ENCODE measurements at regions of chr1 and their contacts with region 1.

Region 1: DNA sequence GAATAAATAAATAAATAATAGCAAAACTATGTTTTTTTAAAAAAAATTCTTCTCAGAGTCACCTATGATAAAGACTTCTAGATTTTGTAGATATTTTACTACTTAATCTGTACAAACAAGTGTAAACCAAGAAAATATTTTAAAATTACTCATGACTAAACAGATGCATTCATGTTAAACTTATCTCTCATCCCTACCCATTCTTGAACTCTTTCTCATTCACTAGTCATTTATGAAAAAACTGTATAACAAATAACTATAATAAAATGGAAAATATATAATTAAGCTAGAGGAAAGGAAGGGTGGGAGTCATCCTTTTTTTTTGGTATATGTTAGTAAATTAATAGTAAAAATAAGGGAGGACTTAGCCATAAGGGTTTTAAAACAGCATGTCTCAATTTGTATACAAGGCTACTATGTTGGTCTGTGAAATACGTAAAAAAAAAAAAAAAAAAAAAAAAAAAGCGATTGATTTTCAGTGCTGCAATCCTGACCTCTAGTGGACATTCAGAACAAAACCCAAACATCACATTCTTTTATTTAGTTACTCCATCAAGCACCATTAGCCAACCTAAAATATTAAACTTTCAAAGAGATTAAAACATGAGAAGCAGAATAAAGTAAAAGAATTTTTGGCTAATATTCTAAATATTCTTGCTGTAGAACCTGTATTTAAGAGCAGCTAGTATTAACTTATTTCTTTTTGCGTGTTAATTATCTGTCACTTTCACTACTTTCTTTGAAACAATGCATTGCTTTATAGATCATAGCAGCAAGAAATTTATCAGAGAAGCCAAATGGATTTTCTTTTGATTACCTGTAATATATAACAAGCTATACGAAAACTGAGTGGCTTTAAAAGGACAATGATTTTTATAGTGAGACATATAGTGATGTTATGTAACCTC is 255.8 kb upstream of the CACYBP start:
- DNase-seq: peak; percentile 28
- ATAC-seq: no peak; the same call in 1 of the 2 replicates
- H3K4me3 ChIP-seq: no peak overlapping the region
- H3K27ac ChIP-seq: no peak overlapping the region
- H3K4me1 ChIP-seq: no peaks in the 10 kb centered on the region
- H3K27me3 ChIP-seq: no peaks in the 10 kb centered on the region
- CTCF ChIP-seq: peak; percentile 53 to 75 (median 60); a peak in 5 of 6 replicates
- POLR2A ChIP-seq: no peak
- RAD21 ChIP-seq: peak; percentile 78

Region 2: DNA sequence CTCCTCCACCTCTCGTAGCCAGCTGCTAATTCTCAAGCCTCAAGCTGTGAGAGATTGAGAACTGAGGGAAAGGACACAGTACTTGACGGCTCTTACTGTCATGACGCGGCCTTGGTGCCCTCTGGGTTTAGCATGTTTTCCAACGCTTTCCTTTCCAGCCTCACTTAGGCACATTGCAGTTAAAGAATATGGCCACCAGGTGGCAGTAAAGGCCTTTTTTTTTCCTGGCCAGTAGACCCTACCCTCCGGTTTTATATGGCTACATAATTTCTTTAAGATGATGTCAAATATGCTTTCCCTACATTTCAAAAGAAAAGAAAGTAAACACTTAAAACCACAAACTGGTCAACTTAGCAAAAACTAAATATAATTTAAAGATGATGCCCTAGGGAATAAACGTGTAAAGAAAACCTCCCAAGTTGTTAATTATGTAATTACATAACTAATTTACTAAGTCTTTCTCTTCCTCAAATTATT is 1323.5 kb before region 1 on chr1:
- CTCF ChIA-PET with region 1: no interaction called
- POLR2A ChIA-PET with region 1: no interaction called
- RAD21 ChIA-PET with region 1: no interaction called
- intact Hi-C with region 1: loop called (anchors 5 kb)
- DNase-seq: peak; percentile 76
- ATAC-seq: peak; percentile 89
- H3K4me3 ChIP-seq: no peak overlapping the region
- H3K27ac ChIP-seq: no peak overlapping the region
- H3K4me1 ChIP-seq: peaks cover 2 to 27% of the 10 kb centered on the region in 2 experiments; a peak in 3 of 4 replicates
- H3K27me3 ChIP-seq: no peaks in the 10 kb centered on the region
- CTCF ChIP-seq: peak; percentile 61 to 91 (median 80)
- POLR2A ChIP-seq: no peak
- RAD21 ChIP-seq: peak; percentile 96

Region 3: DNA sequence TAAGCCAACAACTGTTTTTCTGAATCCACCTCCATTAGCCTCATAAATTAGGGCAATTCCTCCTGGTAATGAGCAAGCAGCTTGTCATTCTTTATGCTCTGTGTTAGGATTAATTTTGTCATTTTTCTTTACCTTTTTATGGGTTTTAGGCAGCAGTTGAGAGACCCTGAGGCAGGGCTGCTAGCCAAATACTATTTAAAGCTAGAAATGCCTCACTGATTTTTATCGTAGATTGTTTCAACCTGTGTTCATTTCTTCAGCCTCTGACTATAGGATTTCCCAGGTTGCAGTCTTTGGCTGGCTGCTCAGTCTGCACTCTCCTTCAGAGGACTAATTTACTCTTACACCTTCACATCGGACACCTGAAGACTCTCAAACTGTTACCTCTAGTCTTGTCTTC is 646.5 kb before region 1 on chr1:
- CTCF ChIA-PET with region 1: no interaction called
- POLR2A ChIA-PET with region 1: no interaction called
- RAD21 ChIA-PET with region 1: no interaction called
- intact Hi-C with region 1: loop called (anchors 5 kb)
- DNase-seq: no peak
- ATAC-seq: no peak
- H3K4me3 ChIP-seq: no peak overlapping the region
- H3K27ac ChIP-seq: no peak overlapping the region
- H3K4me1 ChIP-seq: no peaks in the 10 kb centered on the region
- H3K27me3 ChIP-seq: no peaks in the 10 kb centered on the region
- CTCF ChIP-seq: no peak
- POLR2A ChIP-seq: no peak
- RAD21 ChIP-seq: no peak

Region 4: DNA sequence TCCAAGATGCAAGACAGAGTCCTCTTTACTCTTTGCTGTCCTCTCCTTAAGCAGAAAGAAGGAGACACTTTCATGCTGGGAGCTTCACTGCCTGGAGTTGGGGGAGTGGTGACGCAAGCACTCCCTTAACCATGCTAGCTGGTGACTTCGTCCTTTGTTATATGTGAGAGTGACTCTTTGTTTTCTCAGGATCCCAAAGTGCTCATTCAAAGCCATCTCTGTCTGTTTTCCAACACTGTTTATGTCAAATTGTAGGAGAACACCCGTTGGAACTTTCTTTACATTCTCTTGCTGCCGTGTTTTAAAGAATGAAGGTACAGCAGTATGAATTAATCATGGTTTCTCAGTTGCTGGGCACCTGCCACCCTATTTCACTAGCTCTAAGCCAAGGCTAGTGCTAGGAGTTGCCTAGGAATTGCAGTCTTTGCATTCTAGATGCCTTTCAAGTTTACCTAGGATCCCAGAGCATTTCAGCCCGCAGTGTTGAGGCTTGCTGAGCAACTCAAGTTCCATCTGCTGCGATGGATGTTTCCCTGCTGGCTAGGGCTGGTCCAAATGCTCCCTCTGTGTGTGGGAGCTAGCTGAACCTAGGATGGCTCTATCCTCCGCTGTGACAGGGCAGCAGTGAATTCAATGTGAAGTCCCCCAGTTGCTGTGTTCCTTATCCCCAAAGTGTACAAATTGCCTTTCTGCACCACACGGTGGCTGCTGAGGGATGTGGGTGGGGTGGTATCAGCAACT is 378.7 kb before region 1 on chr1:
- CTCF ChIA-PET with region 1: no interaction called
- POLR2A ChIA-PET with region 1: no interaction called
- RAD21 ChIA-PET with region 1: no interaction called
- intact Hi-C with region 1: no loop called
- DNase-seq: no peak
- ATAC-seq: no peak
- H3K4me3 ChIP-seq: no peak overlapping the region
- H3K27ac ChIP-seq: no peak overlapping the region
- H3K4me1 ChIP-seq: no peaks in the 10 kb centered on the region
- H3K27me3 ChIP-seq: no peaks in the 10 kb centered on the region
- CTCF ChIP-seq: no peak
- POLR2A ChIP-seq: no peak
- RAD21 ChIP-seq: no peak

Region 5: GRCh38 chr1:174726167-174726879 is 17.6 kb before region 1 on chr1:
- CTCF ChIA-PET with region 1: interaction called, 11 read pairs
- POLR2A ChIA-PET with region 1: no interaction called
- RAD21 ChIA-PET with region 1: no interaction called
- intact Hi-C with region 1: no loop called
- DNase-seq: peak; percentile 10
- ATAC-seq: no peak
- H3K4me3 ChIP-seq: no peak overlapping the region
- H3K27ac ChIP-seq: no peak overlapping the region
- H3K4me1 ChIP-seq: no peaks in the 10 kb centered on the region
- H3K27me3 ChIP-seq: no peaks in the 10 kb centered on the region
- CTCF ChIP-seq: peak; percentile 34 to 59 (median 50); a peak in 4 of 6 replicates
- POLR2A ChIP-seq: no peak
- RAD21 ChIP-seq: peak; percentile 70